IMR-90 (cell line): ENCODE measurements at regions of chr6 and their contacts with region 1.

Region 1: DNA sequence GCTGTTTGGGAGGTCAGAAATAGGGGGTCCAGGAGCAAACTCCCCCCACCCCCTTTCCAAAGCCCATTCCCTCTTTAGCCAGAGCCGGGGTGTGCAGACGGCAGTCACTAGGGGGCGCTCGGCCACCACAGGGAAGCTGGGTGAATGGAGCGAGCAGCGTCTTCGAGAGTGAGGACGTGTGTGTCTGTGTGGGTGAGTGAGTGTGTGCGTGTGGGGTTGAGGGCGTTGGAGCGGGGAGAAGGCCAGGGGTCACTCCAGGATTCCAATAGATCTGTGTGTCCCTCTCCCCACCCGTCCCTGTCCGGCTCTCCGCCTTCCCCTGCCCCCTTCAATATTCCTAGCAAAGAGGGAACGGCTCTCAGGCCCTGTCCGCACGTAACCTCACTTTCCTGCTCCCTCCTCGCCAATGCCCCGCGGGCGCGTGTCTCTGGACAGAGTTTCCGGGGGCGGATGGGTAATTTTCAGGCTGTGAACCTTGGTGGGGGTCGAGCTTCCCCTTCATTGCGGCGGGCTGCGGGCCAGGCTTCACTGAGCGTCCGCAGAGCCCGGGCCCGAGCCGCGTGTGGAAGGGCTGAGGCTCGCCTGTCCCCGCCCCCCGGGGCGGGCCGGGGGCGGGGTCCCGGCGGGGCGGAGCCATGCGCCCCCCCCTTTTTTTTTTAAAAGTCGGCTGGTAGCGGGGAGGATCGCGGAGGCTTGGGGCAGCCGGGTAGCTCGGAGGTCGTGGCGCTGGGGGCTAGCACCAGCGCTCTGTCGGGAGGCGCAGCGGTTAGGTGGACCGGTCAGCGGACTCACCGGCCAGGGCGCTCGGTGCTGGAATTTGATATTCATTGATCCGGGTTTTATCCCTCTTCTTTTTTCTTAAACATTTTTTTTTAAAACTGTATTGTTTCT is at the start of gene VEGFA:
- DNase-seq: peak; percentile 90
- ATAC-seq: peak; percentile 58
- H3K4me3 ChIP-seq: peak within 1 kb of the TSS; percentile 94
- H3K27ac ChIP-seq: peak within 1 kb of the TSS; percentile 92
- H3K4me1 ChIP-seq: peaks cover 23% of the 10 kb centered on the region
- H3K27me3 ChIP-seq: no peaks in the 10 kb centered on the region
- CTCF ChIP-seq: peak; percentile 97
- POLR2A ChIP-seq: peak; percentile 98
- RAD21 ChIP-seq: peak; percentile 92
- total RNA-seq, gene VEGFA: 156 and 190 TPM in 2 replicates

Region 2: DNA sequence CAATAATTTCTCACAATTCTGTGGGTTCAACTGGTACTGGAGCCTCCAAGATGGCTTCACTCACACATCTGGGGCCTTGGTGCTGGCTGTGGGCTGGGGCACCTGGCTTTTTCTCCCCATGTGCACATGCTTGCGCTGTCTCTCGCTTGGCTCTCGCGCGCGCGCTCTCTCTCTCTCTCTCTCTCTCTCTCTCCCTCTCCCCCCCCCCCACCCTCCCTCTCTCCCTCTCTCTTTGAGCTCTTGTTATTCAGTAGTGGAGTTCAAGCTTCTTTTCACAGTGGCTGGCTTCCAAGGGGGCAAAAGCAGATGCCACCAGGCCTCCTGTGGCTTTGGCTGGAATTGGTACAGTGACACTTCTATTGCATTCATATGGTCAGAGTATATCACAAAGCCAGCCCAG is 1013.0 kb before region 1 on chr6:
- CTCF ChIA-PET with region 1: no interaction called
- POLR2A ChIA-PET with region 1: no interaction called
- dilution Hi-C with region 1: no loop called
- in situ Hi-C with region 1: no loop called
- intact Hi-C with region 1: no loop called
- DNase-seq: no peak
- ATAC-seq: no peak
- H3K4me3 ChIP-seq: no peak overlapping the region
- H3K27ac ChIP-seq: no peak overlapping the region
- H3K4me1 ChIP-seq: no peaks in the 10 kb centered on the region
- H3K27me3 ChIP-seq: no peaks in the 10 kb centered on the region
- CTCF ChIP-seq: no peak
- POLR2A ChIP-seq: no peak
- RAD21 ChIP-seq: no peak

Region 3: GRCh38 chr6:43228951-43229802 is 540.6 kb before region 1 on chr6 and contains the start of gene DNPH1:
- CTCF ChIA-PET with region 1: no interaction called
- POLR2A ChIA-PET with region 1: no interaction called
- dilution Hi-C with region 1: no loop called
- in situ Hi-C with region 1: no loop called
- intact Hi-C with region 1: no loop called
- DNase-seq: peak; percentile 48
- ATAC-seq: peak; percentile 95
- H3K4me3 ChIP-seq: peak within 1 kb of the TSS; percentile 78
- H3K27ac ChIP-seq: peak within 1 kb of the TSS; percentile 68; the same call in 1 of the 2 replicates
- H3K4me1 ChIP-seq: peaks cover 6% of the 10 kb centered on the region; the same call in 1 of the 2 replicates
- H3K27me3 ChIP-seq: peaks cover 17% of the 10 kb centered on the region
- CTCF ChIP-seq: peak; percentile 91
- POLR2A ChIP-seq: no peak
- RAD21 ChIP-seq: peak; percentile 47
- total RNA-seq, gene DNPH1: 19.0 and 22.8 TPM in 2 replicates

Region 4: GRCh38 chr6:43629505-43630300 is 140.1 kb before region 1 on chr6:
- CTCF ChIA-PET with region 1: no interaction called
- POLR2A ChIA-PET with region 1: no interaction called
- dilution Hi-C with region 1: no loop called
- in situ Hi-C with region 1: no loop called
- intact Hi-C with region 1: loop called (anchors 5 kb)
- DNase-seq: peak; percentile 98
- ATAC-seq: peak; percentile 81
- H3K4me3 ChIP-seq: peak overlapping the region; percentile 46
- H3K27ac ChIP-seq: peak overlapping the region; percentile 82
- H3K4me1 ChIP-seq: peaks cover 8% of the 10 kb centered on the region
- H3K27me3 ChIP-seq: no peaks in the 10 kb centered on the region
- CTCF ChIP-seq: no peak
- POLR2A ChIP-seq: peak; percentile 60; the same call in 1 of the 2 replicates
- RAD21 ChIP-seq: no peak

Region 5: DNA sequence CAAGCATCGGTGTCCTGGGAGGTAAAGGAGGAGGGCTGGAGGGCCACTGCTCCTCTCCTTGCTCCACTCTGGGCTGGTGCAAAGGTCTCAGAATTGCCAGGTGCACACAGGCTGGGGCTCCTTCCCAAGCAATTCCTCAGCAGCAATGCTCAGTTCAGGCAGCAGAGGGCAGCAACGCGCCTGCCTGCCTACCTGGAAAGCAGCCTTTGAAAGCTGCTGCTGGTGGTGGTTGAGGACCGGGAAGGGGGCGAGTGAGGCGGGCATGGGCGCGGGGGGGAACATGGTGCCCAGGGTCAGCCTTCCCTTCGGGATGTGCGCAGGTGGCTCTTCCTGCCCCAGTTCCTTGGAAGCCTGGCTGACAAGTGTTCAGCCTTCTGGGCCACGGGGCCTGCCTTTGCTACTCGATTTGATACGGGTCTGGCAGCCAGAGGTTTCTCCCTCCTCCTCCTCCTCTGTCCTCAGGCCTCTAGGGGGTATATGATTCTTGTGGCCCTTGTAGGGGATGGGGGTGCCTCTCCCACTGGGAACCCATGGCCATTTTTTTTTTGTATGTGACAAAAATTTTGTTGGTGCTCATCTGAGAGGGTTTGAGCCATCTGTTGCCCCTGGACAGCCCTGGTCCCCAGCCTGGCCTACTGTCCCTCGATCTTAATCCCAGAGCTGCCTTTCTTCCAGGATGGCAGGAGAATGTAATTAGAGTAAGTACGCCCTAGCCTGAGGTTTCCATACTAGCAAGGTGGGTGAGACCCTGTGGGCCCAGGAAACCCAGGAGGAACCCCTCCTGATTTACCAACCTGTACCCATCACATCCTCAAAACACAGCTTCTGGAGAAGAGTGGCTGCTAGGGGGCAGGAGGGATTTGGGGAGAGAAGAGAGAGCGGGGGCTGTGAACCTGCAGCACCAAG is 102.3 kb before region 1 on chr6:
- CTCF ChIA-PET with region 1: interaction called, 3 read pairs
- POLR2A ChIA-PET with region 1: interaction called, 3 read pairs
- dilution Hi-C with region 1: no loop called
- in situ Hi-C with region 1: loop called (anchors 5 kb)
- intact Hi-C with region 1: loop called (anchors 1 kb)
- DNase-seq: peak; percentile 60
- ATAC-seq: peak; percentile 73
- H3K4me3 ChIP-seq: no peak overlapping the region
- H3K27ac ChIP-seq: no peak overlapping the region
- H3K4me1 ChIP-seq: peaks cover 17% of the 10 kb centered on the region
- H3K27me3 ChIP-seq: no peaks in the 10 kb centered on the region
- CTCF ChIP-seq: peak; percentile 89
- POLR2A ChIP-seq: no peak
- RAD21 ChIP-seq: peak; percentile 91

Region 6: GRCh38 chr6:43687437-43688347 is 82.1 kb before region 1 on chr6 and contains the start of gene MRPS18A:
- CTCF ChIA-PET with region 1: no interaction called
- POLR2A ChIA-PET with region 1: no interaction called
- dilution Hi-C with region 1: no loop called
- in situ Hi-C with region 1: no loop called
- intact Hi-C with region 1: loop called (anchors 5 kb)
- DNase-seq: peak; percentile 80
- ATAC-seq: peak; percentile 99
- H3K4me3 ChIP-seq: peak within 1 kb of the TSS; percentile 82
- H3K27ac ChIP-seq: peak within 1 kb of the TSS; percentile 75
- H3K4me1 ChIP-seq: peaks cover 2% of the 10 kb centered on the region; the same call in 1 of the 2 replicates
- H3K27me3 ChIP-seq: no peaks in the 10 kb centered on the region
- CTCF ChIP-seq: no peak
- POLR2A ChIP-seq: peak; percentile 70
- RAD21 ChIP-seq: no peak; the same call in 1 of the 2 replicates
- total RNA-seq, gene MRPS18A: 43.0 and 47.0 TPM in 2 replicates

Region 7: DNA sequence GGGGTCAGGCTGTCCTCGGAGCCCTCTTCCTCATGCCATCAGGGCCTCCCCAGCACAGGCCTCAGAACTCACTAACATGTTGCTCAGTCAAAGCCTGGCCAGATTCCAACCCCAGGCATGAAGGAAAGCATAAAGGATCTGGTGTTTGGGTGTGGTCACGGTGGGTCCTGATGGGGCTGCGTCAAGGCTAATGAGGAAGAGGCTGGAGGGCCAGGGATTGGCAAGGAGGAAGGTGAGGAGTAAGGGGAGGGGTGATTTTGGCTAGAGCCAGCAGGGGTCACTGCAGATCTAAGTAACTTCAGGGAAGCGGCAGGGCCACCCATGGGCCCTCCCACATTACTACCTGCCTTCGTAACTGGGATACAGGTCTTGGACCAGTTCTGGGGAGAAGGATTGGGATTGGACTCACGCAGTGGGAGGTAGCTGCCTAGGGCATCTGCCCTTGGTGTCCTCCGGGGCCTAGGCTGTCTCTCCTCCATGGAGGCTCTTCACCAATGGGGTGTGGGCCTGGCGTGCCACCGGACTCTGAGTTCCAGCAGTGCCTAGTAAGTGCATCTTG is 46.0 kb before region 1 on chr6:
- CTCF ChIA-PET with region 1: interaction called, 3 read pairs
- POLR2A ChIA-PET with region 1: no interaction called
- dilution Hi-C with region 1: no loop called
- in situ Hi-C with region 1: no loop called
- intact Hi-C with region 1: loop called (anchors 1 kb)
- DNase-seq: peak; percentile 70
- ATAC-seq: peak; percentile 77
- H3K4me3 ChIP-seq: no peak overlapping the region
- H3K27ac ChIP-seq: no peak overlapping the region
- H3K4me1 ChIP-seq: peaks cover 20% of the 10 kb centered on the region
- H3K27me3 ChIP-seq: peaks cover 12% of the 10 kb centered on the region
- CTCF ChIP-seq: peak; percentile 70
- POLR2A ChIP-seq: no peak
- RAD21 ChIP-seq: peak; percentile 81

Region 8: DNA sequence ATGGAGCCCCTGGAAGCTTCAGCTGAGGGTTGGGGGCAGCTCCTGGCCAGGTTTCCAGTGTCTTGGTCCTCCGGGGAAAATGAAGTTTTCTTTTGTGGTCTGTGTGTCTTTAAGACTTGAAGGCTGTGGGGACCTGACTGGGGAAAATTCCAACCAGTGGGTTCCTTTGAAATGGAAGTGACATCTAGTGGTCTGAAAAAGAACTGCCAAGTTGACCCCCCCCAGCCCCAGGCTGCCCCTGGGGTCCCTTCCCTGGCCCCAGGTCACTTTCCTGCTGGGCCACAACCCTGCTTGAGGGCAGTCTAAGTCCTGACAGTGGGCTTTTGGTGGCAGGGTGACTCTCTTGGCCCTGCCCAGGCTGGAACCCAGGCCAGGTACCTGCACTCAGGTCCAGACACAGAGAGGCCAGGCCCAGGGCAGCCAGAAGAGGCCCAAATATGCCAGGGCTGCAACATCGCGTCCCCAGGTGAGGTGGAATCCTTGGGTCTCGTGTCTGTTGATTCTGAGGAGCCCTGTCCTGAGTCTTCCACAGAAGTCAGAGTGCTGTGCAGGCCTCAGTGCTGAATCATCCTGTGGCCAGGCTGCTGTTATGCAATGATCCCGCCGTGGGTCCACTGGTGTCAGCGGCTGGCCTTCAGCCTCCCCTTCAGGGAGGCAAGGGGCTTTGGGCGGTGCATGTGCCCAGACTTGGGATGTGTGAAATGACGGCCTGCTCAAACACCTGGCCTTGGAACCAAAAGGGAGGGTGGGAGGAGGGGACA is 68.7 kb after region 1 on chr6:
- CTCF ChIA-PET with region 1: no interaction called
- POLR2A ChIA-PET with region 1: no interaction called
- dilution Hi-C with region 1: no loop called
- in situ Hi-C with region 1: no loop called
- intact Hi-C with region 1: loop called (anchors 2 kb)
- DNase-seq: peak; percentile 81
- ATAC-seq: peak; percentile 77
- H3K4me3 ChIP-seq: no peak overlapping the region
- H3K27ac ChIP-seq: peak overlapping the region; percentile 39
- H3K4me1 ChIP-seq: peaks cover 37% of the 10 kb centered on the region
- H3K27me3 ChIP-seq: peaks cover 5% of the 10 kb centered on the region; the same call in 1 of the 2 replicates
- CTCF ChIP-seq: peak; percentile 55
- POLR2A ChIP-seq: no peak
- RAD21 ChIP-seq: peak; percentile 44

Region 9: DNA sequence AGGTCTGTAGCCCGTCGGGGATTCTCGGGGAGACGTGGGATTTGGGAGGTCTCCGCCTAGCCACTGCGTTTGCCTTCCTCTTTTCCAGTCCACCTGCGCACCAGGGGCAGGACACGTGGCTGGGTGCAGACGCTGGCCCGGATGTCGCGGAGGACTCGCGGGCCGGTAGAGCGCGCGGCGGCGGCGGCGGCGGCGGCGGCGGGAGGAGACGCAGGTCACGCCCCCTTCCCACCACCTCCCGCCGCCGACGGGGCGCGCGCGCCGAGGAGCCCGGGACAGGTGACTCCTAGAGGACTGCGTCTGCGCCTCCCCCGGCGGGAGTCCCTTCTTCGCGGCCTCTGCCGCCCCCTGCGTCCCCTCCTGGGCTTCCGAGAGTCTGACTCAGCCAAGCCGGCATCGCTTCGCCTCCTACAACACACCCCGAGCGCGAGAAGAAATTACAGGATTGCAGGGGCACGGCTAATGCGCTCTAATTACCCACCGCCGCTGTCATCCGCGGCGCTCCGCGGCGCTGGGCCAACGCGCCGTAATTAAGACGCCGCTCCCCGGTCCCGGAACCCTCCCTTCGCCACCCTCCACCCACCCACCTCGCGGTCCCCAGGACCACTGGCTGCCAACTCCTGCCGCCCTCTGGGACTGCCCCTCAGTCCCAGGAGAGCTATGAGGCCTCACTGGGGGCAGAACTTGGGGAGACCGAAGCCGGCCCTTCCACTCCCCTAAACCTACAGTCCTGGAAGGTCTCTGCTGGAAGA is 233.0 kb after region 1 on chr6:
- CTCF ChIA-PET with region 1: interaction called, 3 read pairs
- POLR2A ChIA-PET with region 1: no interaction called
- dilution Hi-C with region 1: no loop called
- in situ Hi-C with region 1: no loop called
- intact Hi-C with region 1: loop called (anchors 1 kb)
- DNase-seq: peak; percentile 54
- ATAC-seq: peak; percentile 62
- H3K4me3 ChIP-seq: peak overlapping the region; percentile 36
- H3K27ac ChIP-seq: peak overlapping the region; percentile 24; the same call in 1 of the 2 replicates
- H3K4me1 ChIP-seq: peaks cover 26% of the 10 kb centered on the region
- H3K27me3 ChIP-seq: no peaks in the 10 kb centered on the region
- CTCF ChIP-seq: peak; percentile 46
- POLR2A ChIP-seq: no peak
- RAD21 ChIP-seq: peak; percentile 58

Region 10: GRCh38 chr6:44630125-44631028 is 860.6 kb after region 1 on chr6:
- CTCF ChIA-PET with region 1: no interaction called
- POLR2A ChIA-PET with region 1: no interaction called
- dilution Hi-C with region 1: no loop called
- in situ Hi-C with region 1: no loop called
- intact Hi-C with region 1: no loop called
- DNase-seq: peak; percentile 51
- ATAC-seq: peak; percentile 95
- H3K4me3 ChIP-seq: no peak overlapping the region
- H3K27ac ChIP-seq: no peak overlapping the region
- H3K4me1 ChIP-seq: no peaks in the 10 kb centered on the region
- H3K27me3 ChIP-seq: peaks cover 19% of the 10 kb centered on the region
- CTCF ChIP-seq: peak; percentile 68
- POLR2A ChIP-seq: no peak
- RAD21 ChIP-seq: peak; percentile 74